Endothelial cell of umbilical vein (primary cell): ENCODE measurements at regions of chr7 and their contacts with region 1.

Region 1: DNA sequence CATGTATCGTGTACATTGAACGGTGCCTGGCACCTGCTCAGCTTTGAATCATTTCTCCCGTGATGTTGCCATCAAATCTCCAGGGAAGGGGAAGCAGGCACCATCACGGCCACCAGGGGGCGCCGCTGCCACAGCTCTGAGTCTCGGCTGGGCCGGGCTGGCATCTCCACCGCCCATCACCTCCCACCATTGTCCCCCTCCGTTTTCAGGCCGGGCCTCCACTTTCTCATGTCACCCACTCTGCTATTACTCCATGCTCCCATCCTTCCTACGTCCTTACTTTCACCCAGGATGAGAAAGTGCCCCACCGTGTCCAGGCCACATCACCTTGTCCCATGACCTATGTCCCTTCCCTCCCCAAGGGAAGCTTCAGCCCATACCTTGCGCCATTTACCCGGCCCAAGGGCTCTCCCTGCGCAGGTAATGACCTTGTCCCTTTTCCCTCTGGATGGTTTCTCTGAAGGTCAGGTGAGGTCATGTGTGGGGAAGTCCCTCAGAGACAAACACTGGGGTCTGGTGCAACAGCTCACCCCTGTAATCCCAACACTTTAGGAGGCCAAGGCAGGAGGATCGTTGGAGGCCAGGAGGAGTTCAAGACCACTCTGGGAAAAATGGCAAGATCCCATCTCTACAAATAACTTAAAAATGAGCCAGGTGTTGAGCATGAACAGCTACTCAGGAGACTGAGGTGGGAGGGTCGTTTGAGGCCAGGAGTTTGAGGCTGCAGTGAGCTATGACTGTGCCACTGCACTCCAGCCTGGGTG is 31.8 kb upstream of the OCM2 start:
- DNase-seq: peak; percentile 46
- H3K4me3 ChIP-seq: no peak overlapping the region
- H3K27ac ChIP-seq: no peak overlapping the region
- H3K4me1 ChIP-seq: no peaks in the 10 kb centered on the region
- H3K27me3 ChIP-seq: no peaks in the 10 kb centered on the region
- CTCF ChIP-seq: peak; percentile 87 to 94
- POLR2A ChIP-seq: no peak

Region 2: DNA sequence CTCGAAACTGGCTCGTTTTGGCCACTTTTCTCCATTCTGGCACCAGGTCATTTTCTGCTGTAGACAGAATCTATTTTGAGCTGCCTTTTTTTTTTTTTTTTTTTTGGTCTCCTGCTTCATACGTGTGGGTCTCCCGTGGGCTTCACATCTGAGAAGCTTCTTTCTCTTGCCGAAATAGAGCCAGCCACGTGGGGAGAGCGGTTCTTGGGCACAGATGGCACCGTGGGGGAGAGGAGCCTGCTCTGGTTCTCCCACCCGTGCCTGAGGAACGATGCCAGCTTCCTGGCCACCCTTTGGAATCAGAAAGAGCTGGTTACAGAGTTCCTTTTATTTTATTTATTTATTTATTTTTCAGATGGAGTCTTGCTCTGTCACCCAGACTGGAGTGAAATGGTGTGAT is 17.0 kb after region 1 on chr7:
- CTCF ChIA-PET with region 1: interaction called, 30 read pairs
- POLR2A ChIA-PET with region 1: no interaction called
- dilution Hi-C with region 1: no loop called
- intact Hi-C with region 1: no loop called
- DNase-seq: no peak
- H3K4me3 ChIP-seq: no peak overlapping the region
- H3K27ac ChIP-seq: no peak overlapping the region
- H3K4me1 ChIP-seq: no peaks in the 10 kb centered on the region
- H3K27me3 ChIP-seq: no peaks in the 10 kb centered on the region
- CTCF ChIP-seq: no peak
- POLR2A ChIP-seq: no peak

Region 3: GRCh38 chr7:98086281-98086718 is 64.5 kb after region 1 on chr7:
- CTCF ChIA-PET with region 1: interaction called, 13 read pairs
- POLR2A ChIA-PET with region 1: no interaction called
- dilution Hi-C with region 1: no loop called
- intact Hi-C with region 1: no loop called
- DNase-seq: no peak
- H3K4me3 ChIP-seq: no peak overlapping the region
- H3K27ac ChIP-seq: no peak overlapping the region
- H3K4me1 ChIP-seq: no peaks in the 10 kb centered on the region
- H3K27me3 ChIP-seq: no peaks in the 10 kb centered on the region
- CTCF ChIP-seq: no peak
- POLR2A ChIP-seq: no peak

Region 4: GRCh38 chr7:98119256-98119918 is 97.6 kb after region 1 on chr7:
- CTCF ChIA-PET with region 1: interaction called, 10 read pairs
- POLR2A ChIA-PET with region 1: no interaction called
- dilution Hi-C with region 1: no loop called
- intact Hi-C with region 1: no loop called
- DNase-seq: no peak
- H3K4me3 ChIP-seq: no peak overlapping the region
- H3K27ac ChIP-seq: no peak overlapping the region
- H3K4me1 ChIP-seq: peaks cover 3% of the 10 kb centered on the region
- H3K27me3 ChIP-seq: no peaks in the 10 kb centered on the region
- CTCF ChIP-seq: no peak
- POLR2A ChIP-seq: no peak

Region 5: DNA sequence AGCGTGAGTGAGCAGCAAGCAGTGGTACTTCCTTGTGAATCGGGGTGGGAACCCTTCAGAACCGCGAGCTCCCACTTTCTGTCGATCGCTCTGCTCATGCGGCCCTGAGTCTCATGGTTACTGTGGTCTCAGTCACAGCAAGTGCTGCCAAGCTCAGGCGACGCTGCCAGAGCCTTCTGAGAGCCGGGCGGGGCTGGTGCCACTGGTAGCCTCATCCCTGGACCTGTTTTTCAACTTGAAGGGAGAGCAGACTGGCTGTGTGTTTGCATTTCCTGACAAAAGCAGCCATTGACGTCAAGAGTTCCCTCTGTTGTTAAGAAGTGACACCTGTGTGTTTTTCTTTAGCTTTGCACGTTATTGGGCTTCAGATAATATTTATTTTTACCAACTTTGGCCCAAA is 156.6 kb after region 1 on chr7:
- CTCF ChIA-PET with region 1: interaction called, 20 read pairs
- POLR2A ChIA-PET with region 1: no interaction called
- dilution Hi-C with region 1: loop called (anchors 25 kb)
- intact Hi-C with region 1: no loop called
- DNase-seq: no peak
- H3K4me3 ChIP-seq: no peak overlapping the region
- H3K27ac ChIP-seq: no peak overlapping the region
- H3K4me1 ChIP-seq: no peaks in the 10 kb centered on the region
- H3K27me3 ChIP-seq: no peaks in the 10 kb centered on the region
- CTCF ChIP-seq: no peak
- POLR2A ChIP-seq: no peak

Region 6: GRCh38 chr7:98240961-98241674 is 219.3 kb after region 1 on chr7:
- CTCF ChIA-PET with region 1: interaction called, 4 read pairs
- POLR2A ChIA-PET with region 1: no interaction called
- dilution Hi-C with region 1: no loop called
- intact Hi-C with region 1: loop called (anchors 1 kb)
- DNase-seq: peak; percentile 54
- H3K4me3 ChIP-seq: no peak overlapping the region
- H3K27ac ChIP-seq: no peak overlapping the region
- H3K4me1 ChIP-seq: peaks cover 12% of the 10 kb centered on the region
- H3K27me3 ChIP-seq: no peaks in the 10 kb centered on the region
- CTCF ChIP-seq: peak; percentile 86 to 93
- POLR2A ChIP-seq: no peak

Region 7: GRCh38 chr7:98841179-98841997 is 819.6 kb after region 1 on chr7:
- CTCF ChIA-PET with region 1: interaction called, 20 read pairs
- POLR2A ChIA-PET with region 1: no interaction called
- dilution Hi-C with region 1: no loop called
- intact Hi-C with region 1: no loop called
- DNase-seq: peak; percentile 56
- H3K4me3 ChIP-seq: no peak overlapping the region
- H3K27ac ChIP-seq: no peak overlapping the region
- H3K4me1 ChIP-seq: no peaks in the 10 kb centered on the region
- H3K27me3 ChIP-seq: no peaks in the 10 kb centered on the region
- CTCF ChIP-seq: peak; percentile 93 to 99
- POLR2A ChIP-seq: no peak